ENCODE measurements at regions of chr11 and their contacts with region 1.

Region 1: GRCh38 chr11:76919887-76920746 is 59.4 kb downstream of the ACER3 start:
- DNase-seq: peak; percentile 82
- H3K4me3 Mint-ChIP-seq: peak overlapping the region; percentile 51
- H3K27ac Mint-ChIP-seq: peak overlapping the region; percentile 71
- H3K4me1 Mint-ChIP-seq: peaks cover 8% of the 10 kb centered on the region
- H3K27me3 Mint-ChIP-seq: no peaks in the 10 kb centered on the region
- CTCF ChIP-seq: peak; percentile 81

Region 2: DNA sequence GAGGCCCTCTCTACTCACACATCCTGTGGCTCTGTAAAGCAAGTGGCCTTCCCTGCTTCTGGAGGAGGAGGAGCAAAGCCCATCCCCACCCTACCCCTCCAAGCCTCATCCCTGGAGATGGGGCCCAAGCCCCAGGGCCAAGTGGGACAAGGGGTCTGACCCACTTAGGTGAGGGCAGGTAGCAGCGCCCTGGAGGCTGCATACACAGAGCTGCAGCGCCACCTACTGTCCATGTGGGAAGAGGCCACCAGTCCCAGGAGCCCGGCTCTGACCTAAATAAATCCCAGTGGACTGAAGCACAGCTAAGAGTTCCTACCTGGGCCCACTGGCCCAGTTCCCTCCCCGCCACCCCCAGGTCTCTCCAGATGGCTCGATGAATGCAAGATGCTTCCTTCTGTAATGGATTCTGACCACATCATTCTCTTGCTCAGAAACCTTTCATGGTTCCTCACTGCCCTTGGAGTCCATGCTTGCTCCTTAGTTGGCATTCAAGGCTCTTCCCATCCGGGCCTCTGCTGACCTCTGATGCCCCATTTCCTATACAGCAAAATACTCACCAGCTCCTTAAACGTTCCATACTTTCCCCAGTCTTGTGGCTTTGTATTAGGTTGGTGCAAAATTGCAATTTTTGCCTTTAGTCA is 601.3 kb before region 1 on chr11:
- CTCF ChIA-PET with region 1: no interaction called
- intact Hi-C with region 1: no loop called
- DNase-seq: peak; percentile 84
- H3K4me3 Mint-ChIP-seq: no peak overlapping the region
- H3K27ac Mint-ChIP-seq: no peak overlapping the region
- H3K4me1 Mint-ChIP-seq: peaks cover 9% of the 10 kb centered on the region
- H3K27me3 Mint-ChIP-seq: peaks cover 54% of the 10 kb centered on the region
- CTCF ChIP-seq: peak; percentile 83

Region 3: GRCh38 chr11:76721755-76722677 is 198.1 kb before region 1 on chr11:
- CTCF ChIA-PET with region 1: interaction called, 26 read pairs
- intact Hi-C with region 1: no loop called
- DNase-seq: peak; percentile 86
- H3K4me3 Mint-ChIP-seq: no peak overlapping the region
- H3K27ac Mint-ChIP-seq: no peak overlapping the region
- H3K4me1 Mint-ChIP-seq: peaks cover 10% of the 10 kb centered on the region
- H3K27me3 Mint-ChIP-seq: peaks cover 50% of the 10 kb centered on the region
- CTCF ChIP-seq: peak; percentile 84

Region 4: GRCh38 chr11:76799066-76799804 is 120.9 kb before region 1 on chr11:
- CTCF ChIA-PET with region 1: interaction called, 14 read pairs
- intact Hi-C with region 1: no loop called
- DNase-seq: peak; percentile 90
- H3K4me3 Mint-ChIP-seq: peak overlapping the region; percentile 21
- H3K27ac Mint-ChIP-seq: peak overlapping the region; percentile 74
- H3K4me1 Mint-ChIP-seq: peaks cover 14% of the 10 kb centered on the region
- H3K27me3 Mint-ChIP-seq: no peaks in the 10 kb centered on the region
- CTCF ChIP-seq: peak; percentile 90

Region 5: GRCh38 chr11:76962583-76963416 is 42.7 kb after region 1 on chr11:
- CTCF ChIA-PET with region 1: interaction called, 14 read pairs
- intact Hi-C with region 1: loop called (anchors 2 kb)
- DNase-seq: peak; percentile 58
- H3K4me3 Mint-ChIP-seq: peak overlapping the region; percentile 49
- H3K27ac Mint-ChIP-seq: peak overlapping the region; percentile 89
- H3K4me1 Mint-ChIP-seq: peaks cover 31% of the 10 kb centered on the region
- H3K27me3 Mint-ChIP-seq: no peaks in the 10 kb centered on the region
- CTCF ChIP-seq: no peak

Region 6: GRCh38 chr11:77027270-77027669 is 107.2 kb after region 1 on chr11:
- CTCF ChIA-PET with region 1: interaction called, 28 read pairs
- intact Hi-C with region 1: loop called (anchors 5 kb)
- DNase-seq: peak; percentile 43
- H3K4me3 Mint-ChIP-seq: no peak overlapping the region
- H3K27ac Mint-ChIP-seq: peak overlapping the region; percentile 52
- H3K4me1 Mint-ChIP-seq: peaks cover 61% of the 10 kb centered on the region
- H3K27me3 Mint-ChIP-seq: no peaks in the 10 kb centered on the region
- CTCF ChIP-seq: no peak